Activated CD8-positive, alpha-beta T cell treated with anti-CD3 and anti-CD28 coated beads, Interleukin-2, amount 10 ng/mL, durations not matched to agents 7 days and 5 days (primary cell): ENCODE measurements at regions of chr4 and their contacts with region 1.

Region 1: DNA sequence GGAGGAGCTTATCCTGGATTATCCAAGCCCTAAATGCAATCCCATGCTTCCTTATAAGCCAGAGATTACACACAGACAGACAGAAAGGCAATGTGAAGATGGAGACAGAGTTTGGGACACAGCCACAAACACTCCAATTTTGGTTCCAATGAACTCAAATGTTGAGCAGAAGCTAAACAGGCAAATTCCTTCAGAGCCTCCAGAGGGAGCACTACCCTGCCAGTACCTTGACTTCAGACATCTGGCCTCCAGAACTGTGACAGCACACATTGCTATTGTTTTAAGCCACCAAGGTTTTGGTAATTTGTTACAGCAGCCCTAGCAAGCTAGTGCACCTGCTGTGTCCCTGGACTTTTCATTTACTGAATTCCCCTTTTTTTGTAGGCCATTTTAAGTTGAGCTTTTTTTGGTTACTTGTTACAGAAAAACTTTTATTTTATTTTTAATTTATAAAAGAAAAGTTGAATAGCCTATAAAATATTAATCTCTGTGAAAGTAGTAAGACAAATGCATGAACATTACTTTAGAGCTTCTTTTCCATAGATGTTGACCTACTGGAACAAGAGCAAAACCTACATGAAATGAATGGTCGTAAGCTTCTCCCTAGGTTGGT is 33.4 kb upstream of the SRD5A3 start:
- DNase-seq: peak; percentile 46
- ATAC-seq: no peak
- H3K4me3 Mint-ChIP-seq: no peak overlapping the region
- H3K27ac Mint-ChIP-seq: no peak overlapping the region
- H3K4me1 Mint-ChIP-seq: no peaks in the 10 kb centered on the region
- H3K27me3 Mint-ChIP-seq: no peaks in the 10 kb centered on the region

Region 2: GRCh38 chr4:54558889-54559677 is 753.5 kb before region 1 on chr4:
- CTCF ChIA-PET with region 1: no interaction called
- POLR2A ChIA-PET with region 1: no interaction called
- DNase-seq: no peak
- ATAC-seq: no peak
- H3K4me3 Mint-ChIP-seq: no peak overlapping the region
- H3K27ac Mint-ChIP-seq: no peak overlapping the region
- H3K4me1 Mint-ChIP-seq: no peaks in the 10 kb centered on the region
- H3K27me3 Mint-ChIP-seq: peaks cover 2% of the 10 kb centered on the region

Region 3: DNA sequence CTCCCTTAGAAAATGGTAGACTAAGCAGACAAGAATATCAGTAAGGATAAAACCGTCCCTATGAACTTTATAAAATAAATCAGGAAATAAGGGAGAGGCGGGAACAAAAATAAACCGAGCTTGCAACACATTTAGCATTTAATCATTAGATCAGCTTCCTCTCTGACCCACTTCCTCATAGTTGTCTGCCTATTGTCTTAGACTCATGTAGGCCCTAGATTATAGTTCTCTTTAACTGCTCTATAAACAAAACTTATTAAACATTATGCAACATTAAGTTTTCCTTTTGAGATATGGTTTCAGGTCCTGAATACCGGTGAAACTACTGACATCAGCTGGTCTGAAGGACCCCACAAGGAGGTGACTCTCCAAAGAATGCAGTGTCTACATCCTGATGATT is 17.6 kb after region 1 on chr4:
- CTCF ChIA-PET with region 1: interaction called, 12 read pairs
- POLR2A ChIA-PET with region 1: no interaction called
- DNase-seq: no peak
- ATAC-seq: no peak
- H3K4me3 Mint-ChIP-seq: no peak overlapping the region
- H3K27ac Mint-ChIP-seq: no peak overlapping the region
- H3K4me1 Mint-ChIP-seq: peaks cover 4% of the 10 kb centered on the region
- H3K27me3 Mint-ChIP-seq: peaks cover 2% of the 10 kb centered on the region

Region 4: GRCh38 chr4:55530691-55531090 is 218.1 kb after region 1 on chr4:
- CTCF ChIA-PET with region 1: no interaction called
- POLR2A ChIA-PET with region 1: no interaction called
- DNase-seq: no peak
- ATAC-seq: no peak
- H3K4me3 Mint-ChIP-seq: no peak overlapping the region
- H3K27ac Mint-ChIP-seq: no peak overlapping the region
- H3K4me1 Mint-ChIP-seq: no peaks in the 10 kb centered on the region
- H3K27me3 Mint-ChIP-seq: no peaks in the 10 kb centered on the region